ENCODE measurements at regions of chr3 and their contacts with region 1.

Region 1: GRCh38 chr3:111717601-111718000 is 122.5 kb upstream of the ZBED2 start:
- DNase-seq: peak; percentile 66
- H3K4me3 Mint-ChIP-seq: no peak overlapping the region
- H3K27ac Mint-ChIP-seq: no peak overlapping the region
- H3K4me1 Mint-ChIP-seq: peaks cover 8% of the 10 kb centered on the region
- H3K27me3 Mint-ChIP-seq: no peaks in the 10 kb centered on the region
- CTCF ChIP-seq: peak; percentile 79

Region 2: DNA sequence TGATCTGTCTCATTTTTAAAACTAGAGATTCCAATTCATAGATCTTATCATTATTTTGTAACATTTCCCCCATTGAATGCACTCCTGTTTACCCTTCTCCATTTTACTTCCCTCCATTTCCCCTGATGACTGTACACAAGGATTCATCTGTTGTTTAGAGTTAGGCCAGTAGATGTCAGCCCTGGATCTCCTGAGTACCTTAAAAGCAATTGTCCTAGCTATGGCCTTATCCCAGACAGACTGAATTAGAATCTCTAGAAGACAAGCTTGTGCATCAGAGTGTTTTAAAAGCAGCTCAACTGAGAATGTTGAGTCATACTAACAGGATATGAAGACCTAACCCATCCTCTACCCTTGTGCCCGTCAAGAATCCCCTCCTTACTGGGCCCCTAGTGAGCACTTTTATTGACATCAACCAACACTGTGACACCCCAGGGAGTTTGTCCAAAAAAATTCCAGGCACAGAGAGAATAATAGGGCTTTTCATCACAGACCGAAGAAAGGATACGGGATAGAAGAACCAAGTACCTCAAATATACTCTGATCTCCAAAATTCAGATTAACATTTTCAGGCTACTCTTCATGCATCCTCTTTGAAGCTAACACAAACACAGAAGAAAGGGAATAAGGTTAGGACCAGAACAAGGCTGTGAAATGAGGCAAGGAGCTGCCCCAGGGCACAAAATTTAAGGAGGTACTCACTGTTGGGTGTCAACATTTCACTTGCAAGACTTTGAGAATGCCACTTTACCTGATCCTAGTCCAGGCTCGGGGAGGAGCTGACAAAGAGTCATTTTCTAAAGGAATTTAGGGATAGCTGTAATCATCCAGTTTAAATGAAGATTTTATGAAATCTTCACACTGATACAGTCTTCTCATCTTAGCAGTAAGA is 139.6 kb before region 1 on chr3:
- CTCF ChIA-PET with region 1: interaction called, 16 read pairs
- intact Hi-C with region 1: no loop called
- DNase-seq: peak; percentile 32
- H3K4me3 Mint-ChIP-seq: no peak overlapping the region
- H3K27ac Mint-ChIP-seq: no peak overlapping the region
- H3K4me1 Mint-ChIP-seq: peaks cover 33% of the 10 kb centered on the region
- H3K27me3 Mint-ChIP-seq: no peaks in the 10 kb centered on the region
- CTCF ChIP-seq: no peak

Region 3: GRCh38 chr3:111747490-111747889 is 29.9 kb after region 1 on chr3:
- CTCF ChIA-PET with region 1: interaction called, 6 read pairs
- intact Hi-C with region 1: loop called (anchors 2 kb)
- DNase-seq: peak; percentile 59
- H3K4me3 Mint-ChIP-seq: peak overlapping the region; percentile 35
- H3K27ac Mint-ChIP-seq: peak overlapping the region; percentile 84
- H3K4me1 Mint-ChIP-seq: peaks cover 45% of the 10 kb centered on the region
- H3K27me3 Mint-ChIP-seq: no peaks in the 10 kb centered on the region
- CTCF ChIP-seq: no peak

Region 4: DNA sequence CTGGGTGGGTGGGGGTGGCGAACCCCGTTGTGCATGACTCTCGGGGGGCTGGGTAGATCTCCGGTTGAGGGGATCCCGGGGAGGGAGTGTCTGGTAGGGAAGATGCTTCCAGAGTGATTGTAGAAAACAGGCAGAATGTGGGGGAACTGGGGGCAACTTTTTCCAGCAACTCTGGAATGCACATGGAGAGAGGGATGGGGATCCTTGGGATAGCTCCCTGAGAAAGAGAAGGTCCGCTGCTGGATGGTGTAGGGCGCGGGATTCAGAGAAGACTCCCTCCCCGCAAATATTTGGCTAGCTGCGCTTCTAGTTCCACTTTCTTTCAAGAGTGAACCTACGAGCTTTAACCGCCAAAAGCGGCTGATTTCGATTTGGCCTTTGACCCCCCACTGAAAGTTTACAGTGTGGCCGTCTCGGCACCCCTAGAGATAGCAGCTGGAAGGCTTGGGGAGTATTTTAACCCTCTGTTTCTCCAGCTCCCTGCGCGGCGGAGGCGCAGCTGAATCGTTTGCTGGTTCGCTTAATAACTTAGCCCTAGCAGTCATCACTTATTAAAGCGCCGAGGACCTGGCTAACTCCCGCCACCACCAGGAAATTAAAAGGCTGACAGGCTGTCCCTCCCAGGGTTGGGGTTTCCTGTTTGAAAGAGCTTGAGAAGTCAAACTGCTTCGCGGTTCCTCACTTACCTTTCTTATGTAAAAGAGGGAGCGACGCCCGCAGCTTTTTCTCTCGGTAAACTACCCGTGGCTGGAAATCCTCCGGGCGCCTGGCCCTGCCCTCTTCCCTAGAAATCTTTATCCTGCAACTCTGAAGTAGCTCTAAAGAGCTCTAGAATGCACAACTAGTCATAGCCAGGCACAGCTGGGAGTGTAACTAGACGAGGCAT is 142.6 kb after region 1 on chr3:
- CTCF ChIA-PET with region 1: interaction called, 67 read pairs
- intact Hi-C with region 1: loop called (anchors 1 kb)
- DNase-seq: peak; percentile 79
- H3K4me3 Mint-ChIP-seq: peak overlapping the region; percentile 88
- H3K27ac Mint-ChIP-seq: peak overlapping the region; percentile 80
- H3K4me1 Mint-ChIP-seq: peaks cover 46% of the 10 kb centered on the region
- H3K27me3 Mint-ChIP-seq: no peaks in the 10 kb centered on the region
- CTCF ChIP-seq: peak; percentile 25

Region 5: GRCh38 chr3:111882799-111883198 is 165.2 kb after region 1 on chr3:
- CTCF ChIA-PET with region 1: no interaction called
- intact Hi-C with region 1: no loop called
- DNase-seq: no peak
- H3K4me3 Mint-ChIP-seq: no peak overlapping the region
- H3K27ac Mint-ChIP-seq: no peak overlapping the region
- H3K4me1 Mint-ChIP-seq: no peaks in the 10 kb centered on the region
- H3K27me3 Mint-ChIP-seq: no peaks in the 10 kb centered on the region
- CTCF ChIP-seq: no peak

Region 6: DNA sequence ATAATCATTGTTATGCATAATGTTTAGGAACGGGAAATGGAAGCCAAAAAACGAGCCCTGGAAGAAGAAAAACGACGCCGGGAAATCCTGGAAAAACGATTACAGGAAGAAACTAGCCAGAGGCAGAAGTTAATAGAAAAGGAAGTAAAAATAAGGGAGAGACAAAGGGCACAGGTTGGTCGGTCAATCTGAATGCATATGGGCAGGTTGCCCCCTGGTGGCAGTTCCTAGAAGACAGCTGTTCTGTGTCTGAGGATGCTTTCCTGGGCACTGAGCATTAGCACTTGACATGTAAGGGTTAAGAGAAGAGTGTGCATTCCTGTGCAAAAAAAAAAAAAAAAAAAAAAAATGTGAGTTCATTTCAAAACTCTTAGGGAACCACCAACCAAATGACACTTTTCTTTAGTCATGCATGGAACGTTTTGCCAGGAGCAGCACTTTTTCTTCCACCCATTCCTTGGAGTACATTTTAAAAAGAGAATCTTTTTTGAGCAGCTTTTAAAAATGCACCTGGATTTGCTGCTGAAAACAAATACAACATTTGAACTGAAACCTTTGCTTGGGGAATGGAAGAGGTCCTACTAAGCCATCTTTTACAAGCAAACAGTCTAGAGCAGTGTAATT is 250.2 kb after region 1 on chr3:
- CTCF ChIA-PET with region 1: interaction called, 25 read pairs
- intact Hi-C with region 1: loop called (anchors 1 kb)
- DNase-seq: peak; percentile 83
- H3K4me3 Mint-ChIP-seq: no peak overlapping the region
- H3K27ac Mint-ChIP-seq: peak overlapping the region; percentile 74
- H3K4me1 Mint-ChIP-seq: peaks cover 14% of the 10 kb centered on the region
- H3K27me3 Mint-ChIP-seq: no peaks in the 10 kb centered on the region
- CTCF ChIP-seq: peak; percentile 74

Measured in Calu3 (cell line).